IMR-90 (cell line): ENCODE measurements at regions of chr16 and their contacts with region 1.

Region 1: GRCh38 chr16:64513871-64514270 is 608.0 kb downstream of the CDH11 start:
- DNase-seq: no peak
- ATAC-seq: no peak
- H3K4me3 ChIP-seq: no peak overlapping the region
- H3K27ac ChIP-seq: no peak overlapping the region
- H3K4me1 ChIP-seq: no peaks in the 10 kb centered on the region
- H3K27me3 ChIP-seq: no peaks in the 10 kb centered on the region
- CTCF ChIP-seq: no peak
- POLR2A ChIP-seq: no peak
- RAD21 ChIP-seq: no peak

Region 2: GRCh38 chr16:63461248-63461841 is 1052.5 kb before region 1 on chr16:
- CTCF ChIA-PET with region 1: no interaction called
- POLR2A ChIA-PET with region 1: no interaction called
- dilution Hi-C with region 1: no loop called
- in situ Hi-C with region 1: no loop called
- intact Hi-C with region 1: loop called (anchors 5 kb)
- DNase-seq: peak; percentile 44
- ATAC-seq: no peak
- H3K4me3 ChIP-seq: no peak overlapping the region
- H3K27ac ChIP-seq: no peak overlapping the region
- H3K4me1 ChIP-seq: no peaks in the 10 kb centered on the region
- H3K27me3 ChIP-seq: no peaks in the 10 kb centered on the region
- CTCF ChIP-seq: peak; percentile 48
- POLR2A ChIP-seq: no peak
- RAD21 ChIP-seq: peak; percentile 67